HepG2 (cell line): ENCODE measurements at regions of chr18 and their contacts with region 1.

Region 1: GRCh38 chr18:48538531-48539405 is at the start of gene CTIF:
- DNase-seq: peak; percentile 95
- ATAC-seq: peak; percentile 79
- H3K4me3 ChIP-seq: peak within 1 kb of the TSS; percentile 88 to 97 (median 94)
- H3K27ac ChIP-seq: peak within 1 kb of the TSS; percentile 75
- H3K4me1 ChIP-seq: peaks cover 66% of the 10 kb centered on the region
- H3K27me3 ChIP-seq: peaks cover 0 to 4% of the 10 kb centered on the region in 2 experiments; a peak in 1 of 5 replicates
- CTCF ChIP-seq: no peak
- EP300 ChIP-seq: no peak; a peak in 1 of 4 replicates
- POLR2A ChIP-seq: peak in 1 of 2 experiments; percentile 81; a peak in 2 of 4 replicates
- RAD21 ChIP-seq: 0 out of 2 replicates have a peak, but pooled peaks have one; percentile 18
- total RNA-seq, gene CTIF: 13.1 and 18.2 TPM in 2 replicates

Region 2: DNA sequence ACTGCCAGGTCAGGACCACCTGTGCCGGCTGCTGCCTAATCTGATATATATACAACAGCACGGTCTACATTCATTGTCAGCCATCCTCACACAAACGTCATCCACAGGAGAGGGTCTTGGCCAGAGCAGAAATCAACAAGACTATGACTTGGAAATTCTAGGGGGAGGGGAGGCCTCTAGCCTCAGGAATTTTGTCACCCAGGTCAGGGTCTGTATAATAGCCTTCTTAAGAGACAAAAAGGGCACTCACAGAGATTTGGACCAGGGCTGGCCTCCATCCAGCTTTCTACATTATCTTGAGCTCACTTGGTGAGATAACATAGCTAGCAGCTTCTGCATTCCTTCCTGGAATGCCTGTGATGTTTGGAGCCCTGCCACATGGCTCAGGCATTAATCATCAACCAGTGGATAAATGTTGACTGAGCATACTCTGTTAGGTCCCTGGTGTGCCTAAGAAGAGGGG is 50.3 kb before region 1 on chr18:
- CTCF ChIA-PET with region 1: no interaction called
- POLR2A ChIA-PET with region 1: interaction called, 12 read pairs
- in situ Hi-C with region 1: loop called (anchors 5 kb)
- intact Hi-C with region 1: loop called (anchors 1 kb)
- DNase-seq: peak; percentile 97
- ATAC-seq: peak; percentile 100
- H3K4me3 ChIP-seq: peak overlapping the region in 2 of 3 experiments; percentile 17 to 29; a peak in 1 of 6 replicates
- H3K27ac ChIP-seq: peak overlapping the region; percentile 57
- H3K4me1 ChIP-seq: peaks cover 65% of the 10 kb centered on the region
- H3K27me3 ChIP-seq: no peaks in the 10 kb centered on the region
- CTCF ChIP-seq: no peak
- EP300 ChIP-seq: peak in 1 of 2 experiments; percentile 85; a peak in 2 of 4 replicates
- POLR2A ChIP-seq: no peak
- RAD21 ChIP-seq: no peak

Region 3: GRCh38 chr18:48493434-48494230 is 45.1 kb before region 1 on chr18:
- CTCF ChIA-PET with region 1: no interaction called
- POLR2A ChIA-PET with region 1: interaction called, 12 read pairs
- in situ Hi-C with region 1: loop called (anchors 5 kb)
- intact Hi-C with region 1: loop called (anchors 1 kb)
- DNase-seq: no peak
- ATAC-seq: no peak
- H3K4me3 ChIP-seq: no peak overlapping the region
- H3K27ac ChIP-seq: no peak overlapping the region
- H3K4me1 ChIP-seq: peaks cover 37% of the 10 kb centered on the region
- H3K27me3 ChIP-seq: no peaks in the 10 kb centered on the region
- CTCF ChIP-seq: no peak
- EP300 ChIP-seq: no peak
- POLR2A ChIP-seq: no peak
- RAD21 ChIP-seq: no peak

Region 4: GRCh38 chr18:48575658-48576456 is 37.1 kb after region 1 on chr18:
- CTCF ChIA-PET with region 1: no interaction called
- POLR2A ChIA-PET with region 1: interaction called, 11 read pairs
- in situ Hi-C with region 1: no loop called
- intact Hi-C with region 1: loop called (anchors 2 kb)
- DNase-seq: peak; percentile 92
- ATAC-seq: peak; percentile 89
- H3K4me3 ChIP-seq: peak overlapping the region; percentile 38 to 64 (median 40)
- H3K27ac ChIP-seq: peak overlapping the region; percentile 94
- H3K4me1 ChIP-seq: peaks cover 81% of the 10 kb centered on the region
- H3K27me3 ChIP-seq: no peaks in the 10 kb centered on the region
- CTCF ChIP-seq: no peak
- EP300 ChIP-seq: peak; percentile 75 to 77; a peak in 2 of 4 replicates
- POLR2A ChIP-seq: peak in 1 of 2 experiments; percentile 53; a peak in 2 of 4 replicates
- RAD21 ChIP-seq: no peak

Region 5: DNA sequence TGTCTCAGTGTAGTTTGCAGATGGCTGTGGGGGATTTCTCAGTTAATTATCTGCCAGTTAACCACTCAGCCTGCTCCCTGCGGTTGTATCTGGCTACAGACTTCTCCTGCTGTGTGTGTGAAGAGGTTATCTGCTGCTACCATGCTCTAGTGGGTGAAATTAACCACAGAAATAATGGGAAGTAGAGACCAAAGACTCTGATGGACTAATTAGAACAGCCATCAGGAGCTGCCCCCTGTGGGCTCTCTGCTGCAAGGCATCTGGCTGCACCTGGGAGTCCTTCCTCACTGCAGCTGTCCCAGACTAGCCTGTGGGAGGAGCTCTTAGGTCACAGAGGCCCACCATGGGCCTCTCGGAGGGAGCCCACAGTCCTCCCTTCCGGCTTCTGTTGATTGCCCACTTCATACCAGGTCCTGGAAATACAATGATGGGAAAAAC is 66.7 kb after region 1 on chr18:
- CTCF ChIA-PET with region 1: no interaction called
- POLR2A ChIA-PET with region 1: interaction called, 3 read pairs
- in situ Hi-C with region 1: no loop called
- intact Hi-C with region 1: loop called (anchors 2 kb)
- DNase-seq: peak; percentile 73
- ATAC-seq: peak; percentile 99
- H3K4me3 ChIP-seq: no peak overlapping the region
- H3K27ac ChIP-seq: no peak overlapping the region
- H3K4me1 ChIP-seq: peaks cover 34% of the 10 kb centered on the region
- H3K27me3 ChIP-seq: no peaks in the 10 kb centered on the region
- CTCF ChIP-seq: peak; percentile 88
- EP300 ChIP-seq: peak in 1 of 2 experiments; percentile 13; a peak in 1 of 4 replicates
- POLR2A ChIP-seq: no peak
- RAD21 ChIP-seq: peak; percentile 92

Region 6: DNA sequence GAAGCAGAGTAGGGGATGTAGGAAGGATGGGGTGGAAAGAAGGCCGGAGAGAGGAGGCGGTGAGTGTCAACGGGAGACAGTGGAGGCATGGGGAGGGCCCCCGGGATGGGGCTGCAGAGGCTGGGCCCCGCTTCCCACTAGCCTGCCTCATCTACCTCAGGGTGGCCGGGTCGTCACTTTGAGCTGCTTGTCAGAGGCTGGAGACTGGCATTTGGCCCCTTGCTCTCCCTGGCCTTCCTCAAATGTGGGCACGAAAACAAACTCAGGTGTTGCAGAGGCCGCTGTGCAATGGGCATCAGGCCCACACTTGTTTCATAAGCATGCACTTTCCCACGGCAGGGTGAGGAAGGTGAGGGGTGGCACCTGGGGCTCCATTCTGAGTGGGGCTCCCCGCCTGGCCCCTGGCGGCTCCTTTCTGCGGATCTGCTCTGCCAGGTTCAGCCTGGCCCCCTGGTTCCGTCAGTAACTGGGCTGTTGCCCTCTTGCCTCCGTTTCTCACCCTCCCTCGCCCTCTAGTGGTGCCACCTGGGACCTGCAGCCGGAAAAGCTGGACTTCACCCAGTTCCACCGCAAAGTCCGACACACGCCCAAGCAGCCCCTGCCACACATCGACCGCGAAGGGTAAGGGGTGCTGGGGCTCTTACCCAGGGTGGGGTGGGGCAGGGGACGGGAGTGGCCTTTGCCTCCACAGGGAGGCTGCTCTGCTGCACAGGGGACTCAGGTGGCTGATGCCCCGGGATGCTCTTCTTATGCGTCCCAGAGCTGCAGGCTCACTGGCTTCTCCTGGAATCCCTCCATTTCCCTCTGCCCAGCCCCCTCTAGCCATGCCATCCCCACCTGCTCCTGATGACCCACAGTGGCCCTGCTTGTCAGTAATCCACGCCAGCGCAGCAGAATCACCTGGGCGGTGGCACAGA is 125.4 kb after region 1 on chr18:
- CTCF ChIA-PET with region 1: no interaction called
- POLR2A ChIA-PET with region 1: no interaction called
- in situ Hi-C with region 1: no loop called
- intact Hi-C with region 1: loop called (anchors 2 kb)
- DNase-seq: peak; percentile 42
- ATAC-seq: peak; percentile 65
- H3K4me3 ChIP-seq: no peak overlapping the region
- H3K27ac ChIP-seq: no peak overlapping the region
- H3K4me1 ChIP-seq: peaks cover 17% of the 10 kb centered on the region
- H3K27me3 ChIP-seq: no peaks in the 10 kb centered on the region
- CTCF ChIP-seq: peak; percentile 96
- EP300 ChIP-seq: no peak
- POLR2A ChIP-seq: no peak
- RAD21 ChIP-seq: peak; percentile 86

Region 7: DNA sequence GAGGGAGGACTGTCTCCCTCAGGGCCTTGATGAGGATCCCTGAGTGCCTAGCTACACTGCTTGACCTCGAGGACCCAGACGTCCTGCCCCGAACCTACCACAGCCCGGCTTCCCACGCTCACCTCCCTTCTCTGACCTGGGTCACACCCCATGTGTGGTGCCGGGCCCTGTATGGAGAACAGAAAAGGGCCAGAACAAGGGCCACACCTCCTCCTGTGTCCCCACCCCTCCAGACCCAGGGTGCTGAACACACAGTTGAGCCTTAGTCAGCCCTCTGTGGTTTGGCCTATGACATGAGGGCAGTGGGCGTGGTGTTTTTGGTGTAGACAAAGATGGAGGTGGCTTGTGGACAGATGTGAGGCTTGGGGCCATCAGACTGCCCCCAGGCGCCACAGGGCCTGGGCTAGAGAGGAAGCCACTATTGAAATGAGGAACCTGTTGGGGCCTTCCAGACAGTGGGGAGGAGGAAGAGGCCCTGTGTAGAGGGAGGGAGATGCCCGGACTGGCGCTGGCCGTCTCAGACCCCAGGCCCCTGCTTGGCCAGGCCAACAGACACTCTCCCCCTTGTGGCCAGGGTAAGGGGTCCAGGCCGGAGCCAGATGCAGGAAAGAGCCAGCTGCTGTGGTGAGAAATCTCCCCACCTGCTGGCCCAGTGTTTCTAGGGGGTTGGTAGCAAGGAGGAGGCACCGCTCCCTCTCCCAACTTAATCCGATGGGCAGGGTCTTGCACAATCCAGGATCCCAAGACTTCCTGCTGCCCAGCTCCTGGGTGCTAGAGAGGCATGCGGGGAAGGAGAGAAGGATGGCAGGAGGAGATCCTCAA is 358.1 kb after region 1 on chr18:
- CTCF ChIA-PET with region 1: no interaction called
- POLR2A ChIA-PET with region 1: no interaction called
- in situ Hi-C with region 1: loop called (anchors 10 kb)
- intact Hi-C with region 1: no loop called
- DNase-seq: peak; percentile 98
- ATAC-seq: peak; percentile 81
- H3K4me3 ChIP-seq: peak overlapping the region; percentile 22 to 61 (median 42); a peak in 5 of 6 replicates
- H3K27ac ChIP-seq: peak overlapping the region; percentile 41
- H3K4me1 ChIP-seq: peaks cover 71% of the 10 kb centered on the region
- H3K27me3 ChIP-seq: no peaks in the 10 kb centered on the region; a peak in 1 of 5 replicates
- CTCF ChIP-seq: peak; percentile 84
- EP300 ChIP-seq: peak in 1 of 2 experiments; percentile 37; a peak in 1 of 4 replicates
- POLR2A ChIP-seq: no peak
- RAD21 ChIP-seq: peak; percentile 96